K562 (cell line): ENCODE measurements at regions of chr4 and their contacts with region 1.

Region 1: GRCh38 chr4:127880764-127881562 is at the start of gene PLK4:
- DNase-seq: peak; percentile 93 to 98 (median 95)
- ATAC-seq: peak; percentile 93
- H3K4me3 ChIP-seq: peak within 1 kb of the TSS; percentile 78
- H3K27ac ChIP-seq: peak within 1 kb of the TSS; percentile 99
- H3K4me1 ChIP-seq: peaks cover 8 to 11% of the 10 kb centered on the region in 2 experiments; a peak in 4 of 5 replicates
- H3K27me3 ChIP-seq: no peaks in the 10 kb centered on the region
- CTCF ChIP-seq: no peak
- EP300 ChIP-seq: peak; percentile 16; the same call in 1 of the 2 replicates
- POLR2A ChIP-seq: peak; percentile 95
- RAD21 ChIP-seq: no peak
- polyA plus RNA-seq, gene PLK4: 16.2 to 27.4 TPM

Region 2: GRCh38 chr4:127782274-127783025 is 98.5 kb before region 1 on chr4 and contains the start of gene HSPA4L:
- CTCF ChIA-PET with region 1: no interaction called
- POLR2A ChIA-PET with region 1: no interaction called
- in situ Hi-C with region 1: no loop called
- intact Hi-C with region 1: loop called (anchors 2 kb)
- DNase-seq: peak in 1 of 4 experiments; percentile 33
- ATAC-seq: peak; percentile 62
- H3K4me3 ChIP-seq: peak within 1 kb of the TSS; percentile 54
- H3K27ac ChIP-seq: peak within 1 kb of the TSS; percentile 75
- H3K4me1 ChIP-seq: peaks cover 0 to 13% of the 10 kb centered on the region in 2 experiments; a peak in 2 of 5 replicates
- H3K27me3 ChIP-seq: no peaks in the 10 kb centered on the region
- CTCF ChIP-seq: peak; percentile 35 to 68 (median 47)
- EP300 ChIP-seq: no peak
- POLR2A ChIP-seq: peak; percentile 93
- RAD21 ChIP-seq: peak in 1 of 2 experiments; percentile 26; a peak in 1 of 4 replicates
- polyA plus RNA-seq, gene HSPA4L: 15.6 to 21.7 TPM

Region 3: DNA sequence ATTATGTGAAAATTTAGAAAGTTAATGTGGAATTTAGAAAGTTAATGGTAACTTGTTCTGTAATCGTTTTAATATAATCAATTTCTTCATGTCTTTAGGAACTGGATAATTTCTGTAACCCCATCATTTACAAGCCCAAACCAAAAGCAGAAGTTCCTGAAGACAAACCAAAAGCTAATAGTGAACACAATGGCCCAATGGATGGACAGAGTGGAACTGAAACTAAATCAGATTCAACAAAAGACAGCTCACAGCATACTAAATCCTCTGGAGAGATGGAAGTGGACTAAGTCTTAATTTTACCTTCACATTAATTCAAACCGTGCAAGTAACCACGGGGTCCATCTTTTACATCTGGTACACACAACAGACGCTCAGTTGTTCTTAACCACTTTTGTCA is 48.4 kb before region 1 on chr4:
- CTCF ChIA-PET with region 1: no interaction called
- POLR2A ChIA-PET with region 1: interaction called, 3 read pairs
- in situ Hi-C with region 1: no loop called
- intact Hi-C with region 1: loop called (anchors 1 kb)
- DNase-seq: no peak
- ATAC-seq: no peak
- H3K4me3 ChIP-seq: no peak overlapping the region
- H3K27ac ChIP-seq: no peak overlapping the region
- H3K4me1 ChIP-seq: no peaks in the 10 kb centered on the region
- H3K27me3 ChIP-seq: no peaks in the 10 kb centered on the region
- CTCF ChIP-seq: no peak
- EP300 ChIP-seq: no peak
- POLR2A ChIP-seq: no peak
- RAD21 ChIP-seq: no peak

Region 4: DNA sequence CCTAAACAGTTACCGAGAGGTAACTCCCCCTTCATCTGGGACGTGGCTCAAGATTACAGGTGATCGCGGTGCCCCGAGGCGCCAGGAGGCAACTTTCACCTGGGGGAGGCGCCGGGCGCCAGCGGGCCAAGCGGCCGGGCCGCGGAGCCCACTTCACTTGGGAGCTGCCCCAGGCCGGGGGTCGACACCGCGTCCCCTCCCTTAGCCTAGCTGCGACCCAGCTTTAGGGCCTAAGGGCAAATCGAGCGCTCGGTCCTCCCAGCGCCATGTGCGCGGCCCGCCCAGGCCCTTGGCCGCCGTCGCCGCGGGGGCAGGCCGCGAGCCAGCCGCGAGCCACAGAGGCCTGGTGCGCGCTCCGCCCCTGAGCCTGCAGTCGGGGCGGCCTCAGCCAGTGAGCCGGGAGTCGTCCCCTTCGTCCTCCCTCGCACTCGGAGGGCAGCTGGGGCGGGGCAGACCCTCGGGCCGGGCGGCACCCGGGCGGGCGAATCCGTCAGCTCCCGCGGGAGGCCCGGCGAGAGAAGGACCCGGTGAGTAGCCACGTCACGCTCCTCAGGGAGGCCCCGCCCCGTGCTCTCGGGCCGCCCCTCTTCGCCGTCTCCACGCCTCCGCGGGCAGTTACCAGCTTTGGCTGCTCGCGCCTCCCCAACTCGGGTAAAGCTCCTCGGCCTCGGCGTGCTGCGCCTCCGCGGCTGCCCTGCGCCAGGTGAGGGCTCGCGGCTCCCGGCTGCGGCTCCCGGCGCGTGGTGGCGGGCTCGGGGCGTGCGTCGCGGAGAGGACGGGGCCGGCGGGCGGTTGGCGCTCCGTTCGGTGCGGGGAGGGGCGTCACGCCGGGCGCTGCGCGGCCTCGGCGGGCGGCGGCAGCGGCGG is 180.0 kb after region 1 on chr4 and contains the start of gene LARP1B:
- CTCF ChIA-PET with region 1: no interaction called
- POLR2A ChIA-PET with region 1: no interaction called
- in situ Hi-C with region 1: no loop called
- intact Hi-C with region 1: loop called (anchors 10 kb)
- DNase-seq: peak; percentile 94 to 97 (median 96)
- ATAC-seq: peak; percentile 93
- H3K4me3 ChIP-seq: peak within 1 kb of the TSS; percentile 79
- H3K27ac ChIP-seq: peak within 1 kb of the TSS; percentile 97
- H3K4me1 ChIP-seq: peaks cover 0 to 27% of the 10 kb centered on the region in 2 experiments; a peak in 4 of 5 replicates
- H3K27me3 ChIP-seq: no peaks in the 10 kb centered on the region
- CTCF ChIP-seq: no peak
- EP300 ChIP-seq: 0 out of 2 replicates have a peak, but pooled peaks have one; percentile 3
- POLR2A ChIP-seq: peak; percentile 84
- RAD21 ChIP-seq: no peak
- polyA plus RNA-seq, gene LARP1B: 19.2 to 25.4 TPM